Posterior cingulate gyrus (tissue), 11 donors: ENCODE measurements at regions of chr12 and their contacts with region 1.

Region 1: GRCh38 chr12:26017484-26018206 is 59.2 kb downstream of the RASSF8 start:
- DNase-seq: no peak

Region 2: GRCh38 chr12:25583545-25583944 is 434.1 kb before region 1 on chr12:
- intact Hi-C with region 1: loop called (anchors 10 kb)
- DNase-seq: no peak

Region 3: DNA sequence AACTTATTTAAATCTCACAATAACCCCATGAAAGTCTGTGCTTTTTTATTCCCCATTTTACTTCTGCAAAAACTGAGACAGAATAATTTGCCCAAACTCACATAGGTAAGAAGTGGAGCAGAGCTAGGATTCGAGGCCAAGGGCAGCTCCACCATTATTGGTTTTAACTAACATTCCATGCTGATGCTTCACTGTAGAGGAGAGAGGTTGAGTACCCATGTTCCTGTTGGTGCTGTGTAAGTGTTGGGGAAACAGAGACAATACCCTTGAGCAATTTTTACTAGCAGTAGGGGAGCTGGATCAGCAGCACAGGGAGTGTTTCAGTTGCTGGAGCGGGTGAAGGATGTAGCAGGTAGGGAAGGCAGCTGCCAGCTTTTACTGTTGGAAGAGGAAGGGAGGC is 38.1 kb before region 1 on chr12:
- intact Hi-C with region 1: no loop called
- DNase-seq: no peak